Activated T-helper 2 cell treated with anti-CD3 and anti-CD28 coated beads, Interferon-gamma antibody, Interleukin-2, Interleukin-4, amounts not matched to agents 10 μg/mL and 5 μg/mL and 100 μg/mL, durations not matched to agents 14 hours and 24 hours and 36 hours (primary cell): ENCODE measurements at regions of chr5 and their contacts with region 1.

Region 1: GRCh38 chr5:115296124-115297022 is at the start of gene CCDC112:
- DNase-seq: peak; percentile 57
- H3K4me3 Mint-ChIP-seq: peak within 1 kb of the TSS; percentile 82
- H3K27ac Mint-ChIP-seq: no peak within 1 kb of the TSS
- H3K4me1 Mint-ChIP-seq: peaks cover 5% of the 10 kb centered on the region
- H3K27me3 Mint-ChIP-seq: peaks cover 55% of the 10 kb centered on the region
- total RNA-seq, gene CCDC112: 0.32 and 0.34 TPM in 2 replicates

Region 2: DNA sequence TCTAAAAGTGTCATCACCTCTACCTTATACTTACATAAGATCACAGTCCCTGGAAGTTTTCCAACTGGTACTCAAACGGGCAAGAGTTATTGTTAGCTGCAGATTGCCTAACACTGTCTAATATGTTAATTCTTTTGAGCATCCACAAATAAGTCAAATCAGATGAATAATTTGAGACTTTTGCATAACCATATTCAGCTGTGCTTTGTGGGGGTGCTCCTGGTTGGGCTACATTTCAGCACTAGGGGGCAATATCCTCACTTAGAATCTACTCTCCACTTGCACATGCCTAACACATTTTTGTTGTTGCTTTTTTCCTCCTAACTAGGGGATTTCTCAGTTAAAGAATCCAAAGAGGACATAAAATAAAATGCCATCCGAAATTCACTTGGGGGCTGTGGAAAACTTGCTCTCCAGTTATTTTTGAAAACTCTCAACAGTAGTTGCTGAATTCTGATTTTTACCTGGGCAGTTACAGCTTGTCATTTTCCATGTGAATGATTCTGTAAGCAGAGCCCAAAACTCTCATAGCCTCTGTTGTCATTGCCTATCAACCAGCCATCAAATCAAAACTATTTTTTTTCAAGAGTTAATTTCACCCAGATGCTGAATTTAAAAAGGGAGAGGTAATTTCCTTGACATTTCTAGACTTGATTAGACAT is 198.2 kb before region 1 on chr5:
- intact Hi-C with region 1: no loop called
- DNase-seq: peak; percentile 14
- H3K4me3 Mint-ChIP-seq: no peak overlapping the region
- H3K27ac Mint-ChIP-seq: no peak overlapping the region
- H3K4me1 Mint-ChIP-seq: no peaks in the 10 kb centered on the region
- H3K27me3 Mint-ChIP-seq: peaks cover 23% of the 10 kb centered on the region

Region 3: DNA sequence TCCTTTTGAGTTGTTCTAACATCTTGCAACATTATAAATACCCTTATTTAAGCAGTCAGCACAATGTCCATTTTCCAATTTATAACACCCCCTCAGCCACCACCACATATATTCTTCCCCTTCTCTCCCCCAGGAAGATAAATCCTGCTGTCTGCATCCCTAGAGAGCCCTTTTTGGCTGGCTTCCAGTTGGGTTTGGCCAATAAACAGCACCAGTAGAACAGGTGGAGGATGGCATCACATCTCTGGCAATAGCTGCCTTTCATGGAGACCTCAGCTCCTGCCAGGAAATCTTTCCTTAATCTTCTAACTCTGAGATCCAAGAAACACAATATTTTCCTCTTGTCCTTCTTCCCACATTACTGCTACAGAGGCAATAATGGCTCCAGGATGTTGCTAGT is 180.4 kb before region 1 on chr5:
- intact Hi-C with region 1: no loop called
- DNase-seq: no peak
- H3K4me3 Mint-ChIP-seq: no peak overlapping the region
- H3K27ac Mint-ChIP-seq: no peak overlapping the region
- H3K4me1 Mint-ChIP-seq: no peaks in the 10 kb centered on the region
- H3K27me3 Mint-ChIP-seq: peaks cover 3% of the 10 kb centered on the region

Region 4: GRCh38 chr5:115262321-115263077 is 33.9 kb before region 1 on chr5 and contains the start of gene PGGT1B:
- intact Hi-C with region 1: loop called (anchors 5 kb)
- DNase-seq: peak; percentile 60
- H3K4me3 Mint-ChIP-seq: peak within 1 kb of the TSS; percentile 91
- H3K27ac Mint-ChIP-seq: peak within 1 kb of the TSS; percentile 83
- H3K4me1 Mint-ChIP-seq: peaks cover 22% of the 10 kb centered on the region
- H3K27me3 Mint-ChIP-seq: no peaks in the 10 kb centered on the region
- total RNA-seq, gene PGGT1B: 39.1 and 39.5 TPM in 2 replicates

Region 5: GRCh38 chr5:115274584-115274983 is 21.8 kb before region 1 on chr5:
- intact Hi-C with region 1: no loop called
- DNase-seq: no peak
- H3K4me3 Mint-ChIP-seq: no peak overlapping the region
- H3K27ac Mint-ChIP-seq: no peak overlapping the region
- H3K4me1 Mint-ChIP-seq: no peaks in the 10 kb centered on the region
- H3K27me3 Mint-ChIP-seq: peaks cover 24% of the 10 kb centered on the region

Region 6: DNA sequence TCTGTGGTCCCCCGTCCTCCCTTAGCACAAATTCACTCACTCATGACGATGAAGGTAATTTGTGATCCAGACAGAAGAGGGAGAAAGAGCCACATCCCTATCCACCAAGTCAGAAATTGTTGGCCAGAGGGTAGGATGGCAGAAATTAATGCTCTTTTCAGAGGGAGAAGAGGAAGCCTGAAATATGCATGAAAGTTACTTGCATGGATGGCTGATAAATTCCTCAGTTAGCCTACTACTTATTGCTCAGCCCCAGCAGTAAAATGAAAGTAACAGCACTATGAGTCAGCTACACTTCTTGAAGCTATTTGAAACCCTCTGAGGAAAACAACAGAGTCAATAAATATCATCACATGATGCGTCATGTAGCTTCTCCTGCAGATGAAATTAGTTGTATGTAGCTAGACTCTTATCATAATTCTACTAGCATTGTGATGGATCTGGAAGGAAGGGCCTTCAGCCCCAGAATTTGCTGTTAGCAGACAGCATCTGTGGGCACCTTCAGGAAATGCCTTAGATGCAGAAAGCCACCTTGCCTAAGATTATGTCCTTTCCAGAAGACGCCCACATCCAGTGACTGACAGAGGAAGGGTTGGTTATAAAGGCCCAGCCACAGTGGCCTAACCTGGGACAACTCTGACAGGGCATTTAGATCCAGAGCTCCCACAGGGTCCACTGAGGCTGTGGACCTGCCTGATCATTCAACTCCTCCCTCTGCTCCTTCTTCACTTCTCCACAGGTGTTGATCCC is 81.3 kb after region 1 on chr5:
- intact Hi-C with region 1: no loop called
- DNase-seq: no peak
- H3K4me3 Mint-ChIP-seq: no peak overlapping the region
- H3K27ac Mint-ChIP-seq: no peak overlapping the region
- H3K4me1 Mint-ChIP-seq: peaks cover 20% of the 10 kb centered on the region
- H3K27me3 Mint-ChIP-seq: no peaks in the 10 kb centered on the region

Region 7: GRCh38 chr5:116084871-116085715 is 788.7 kb after region 1 on chr5 and contains the start of gene COMMD10:
- intact Hi-C with region 1: loop called (anchors 10 kb)
- DNase-seq: peak; percentile 71
- H3K4me3 Mint-ChIP-seq: peak within 1 kb of the TSS; percentile 84
- H3K27ac Mint-ChIP-seq: peak within 1 kb of the TSS; percentile 80
- H3K4me1 Mint-ChIP-seq: peaks cover 32% of the 10 kb centered on the region
- H3K27me3 Mint-ChIP-seq: no peaks in the 10 kb centered on the region
- total RNA-seq, gene COMMD10: 23.6 and 26.1 TPM in 2 replicates